Esophagus squamous epithelium (tissue), 5 donors: ENCODE measurements at regions of chr7 and their contacts with region 1.

Region 1: GRCh38 chr7:139075031-139075652 is 34.4 kb downstream of the ZC3HAV1 start:
- DNase-seq: no peak
- H3K4me3 ChIP-seq: no peak overlapping the region
- H3K27ac ChIP-seq: peak overlapping the region; percentile 9 to 46 (median 34)
- H3K4me1 ChIP-seq: peaks cover 0 to 15% (median 0%) of the 10 kb centered on the region in 3 donors
- H3K27me3 ChIP-seq: no peaks in the 10 kb centered on the region
- CTCF ChIP-seq: peak; percentile 71 to 86 (median 80)
- POLR2A ChIP-seq: no peak

Region 2: GRCh38 chr7:138886501-138886917 is 188.6 kb before region 1 on chr7:
- intact Hi-C with region 1: loop called (anchors 10 kb)
- DNase-seq: no peak
- H3K4me3 ChIP-seq: no peak overlapping the region
- H3K27ac ChIP-seq: no peak overlapping the region
- H3K4me1 ChIP-seq: peaks cover 0 to 29% (median 6%) of the 10 kb centered on the region in 3 donors
- H3K27me3 ChIP-seq: no peaks in the 10 kb centered on the region
- CTCF ChIP-seq: peak; percentile 49 to 76 (median 64)
- POLR2A ChIP-seq: no peak

Region 3: DNA sequence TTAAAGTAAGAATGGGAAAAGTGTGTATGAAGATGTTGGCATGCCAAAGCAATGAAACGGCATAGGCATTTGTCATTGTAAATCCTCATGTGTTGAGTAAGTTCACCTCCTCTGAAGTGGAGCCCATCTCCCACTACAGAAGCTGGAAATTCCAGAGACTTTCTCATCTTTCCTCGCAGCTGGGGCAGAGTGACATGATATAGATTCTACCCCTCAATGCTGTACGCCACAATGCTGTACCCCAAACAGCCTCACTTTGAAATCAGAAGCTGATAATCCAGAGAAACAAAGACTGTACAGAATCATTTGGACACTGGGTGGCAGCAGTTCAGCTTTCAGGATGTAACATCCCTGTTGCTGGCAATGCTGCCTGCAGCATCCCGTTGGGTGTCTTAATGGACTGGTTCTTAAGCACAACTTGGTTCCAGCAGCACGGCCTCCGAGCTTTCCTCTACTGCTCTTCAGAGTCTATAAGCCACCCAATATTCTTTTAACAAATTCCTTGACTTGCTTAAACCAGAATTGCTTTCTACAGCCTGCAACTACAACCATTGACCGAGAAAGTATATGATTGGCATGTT is 58.1 kb before region 1 on chr7:
- intact Hi-C with region 1: loop called (anchors 5 kb)
- DNase-seq: peak; percentile 6
- H3K4me3 ChIP-seq: no peak overlapping the region
- H3K27ac ChIP-seq: no peak overlapping the region
- H3K4me1 ChIP-seq: no peaks in the 10 kb centered on the region
- H3K27me3 ChIP-seq: no peaks in the 10 kb centered on the region
- CTCF ChIP-seq: peak; percentile 26 to 69 (median 53)
- POLR2A ChIP-seq: no peak

Region 4: GRCh38 chr7:139203992-139204391 is 128.8 kb after region 1 on chr7:
- intact Hi-C with region 1: no loop called
- DNase-seq: no peak
- H3K4me3 ChIP-seq: no peak overlapping the region
- H3K27ac ChIP-seq: no peak overlapping the region
- H3K4me1 ChIP-seq: no peaks in the 10 kb centered on the region
- H3K27me3 ChIP-seq: no peaks in the 10 kb centered on the region
- CTCF ChIP-seq: no peak
- POLR2A ChIP-seq: no peak